ENCODE measurements at regions of chrX and their contacts with region 1.

Region 1: GRCh38 chrX:24150051-24150790 is 692 bp downstream of the ZFX start:
- DNase-seq: peak; percentile 76
- H3K4me3 Mint-ChIP-seq: peak overlapping the region; percentile 93
- H3K27ac Mint-ChIP-seq: peak overlapping the region; percentile 87
- H3K4me1 Mint-ChIP-seq: peaks cover 45% of the 10 kb centered on the region
- H3K27me3 Mint-ChIP-seq: no peaks in the 10 kb centered on the region

Region 2: DNA sequence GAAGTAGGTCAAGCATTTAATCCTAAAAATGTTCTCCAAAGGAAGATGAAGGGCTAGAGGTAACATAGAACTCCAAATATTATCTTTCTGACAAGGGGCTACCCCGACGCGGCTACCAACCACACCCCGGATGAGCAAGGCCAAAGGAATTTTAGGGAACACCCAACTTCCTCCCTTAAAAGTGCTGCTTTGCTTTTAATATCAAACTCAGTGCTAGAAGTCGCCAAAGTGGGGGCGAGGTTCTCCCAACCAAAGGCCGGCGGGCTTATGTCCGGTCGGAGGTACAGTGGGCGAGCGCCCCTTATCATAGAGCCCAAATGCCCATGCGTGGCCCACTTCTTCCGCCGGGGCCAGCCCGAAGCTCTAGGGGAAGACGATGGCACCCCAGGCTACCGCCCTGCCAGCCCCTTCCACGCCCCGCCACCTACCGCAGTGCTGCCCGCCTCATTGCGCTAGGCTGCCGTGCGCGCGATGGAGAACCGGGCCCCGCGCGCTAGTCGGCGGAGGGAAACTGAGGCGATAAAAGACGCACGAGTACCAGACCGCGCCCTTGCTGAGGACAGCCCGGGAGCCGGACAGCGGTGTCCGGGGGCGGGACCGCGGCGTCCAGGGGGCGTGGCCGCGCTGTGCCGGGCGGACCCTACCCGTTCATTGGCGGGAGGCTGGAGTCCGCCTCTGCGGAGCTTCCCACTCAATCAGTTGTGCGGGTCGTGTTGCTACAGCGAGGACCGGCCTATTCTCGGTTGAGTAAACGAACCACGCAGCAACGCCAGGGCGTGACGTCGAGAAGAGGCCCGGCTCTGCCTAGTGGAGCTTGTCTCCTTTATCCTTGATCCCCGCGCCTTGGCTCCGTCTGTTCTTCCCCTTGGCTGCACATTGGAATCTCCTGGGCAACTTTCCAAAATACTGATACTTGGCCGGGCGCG is 407.3 kb before region 1 on chrX and contains the start of gene ACOT9:
- intact Hi-C with region 1: loop called (anchors 5 kb)
- DNase-seq: peak; percentile 75
- H3K4me3 Mint-ChIP-seq: peak within 1 kb of the TSS; percentile 94
- H3K27ac Mint-ChIP-seq: peak within 1 kb of the TSS; percentile 90
- H3K4me1 Mint-ChIP-seq: peaks cover 19% of the 10 kb centered on the region
- H3K27me3 Mint-ChIP-seq: no peaks in the 10 kb centered on the region
- total RNA-seq, gene ACOT9: 75.2 and 76.0 TPM in 2 replicates

Region 3: DNA sequence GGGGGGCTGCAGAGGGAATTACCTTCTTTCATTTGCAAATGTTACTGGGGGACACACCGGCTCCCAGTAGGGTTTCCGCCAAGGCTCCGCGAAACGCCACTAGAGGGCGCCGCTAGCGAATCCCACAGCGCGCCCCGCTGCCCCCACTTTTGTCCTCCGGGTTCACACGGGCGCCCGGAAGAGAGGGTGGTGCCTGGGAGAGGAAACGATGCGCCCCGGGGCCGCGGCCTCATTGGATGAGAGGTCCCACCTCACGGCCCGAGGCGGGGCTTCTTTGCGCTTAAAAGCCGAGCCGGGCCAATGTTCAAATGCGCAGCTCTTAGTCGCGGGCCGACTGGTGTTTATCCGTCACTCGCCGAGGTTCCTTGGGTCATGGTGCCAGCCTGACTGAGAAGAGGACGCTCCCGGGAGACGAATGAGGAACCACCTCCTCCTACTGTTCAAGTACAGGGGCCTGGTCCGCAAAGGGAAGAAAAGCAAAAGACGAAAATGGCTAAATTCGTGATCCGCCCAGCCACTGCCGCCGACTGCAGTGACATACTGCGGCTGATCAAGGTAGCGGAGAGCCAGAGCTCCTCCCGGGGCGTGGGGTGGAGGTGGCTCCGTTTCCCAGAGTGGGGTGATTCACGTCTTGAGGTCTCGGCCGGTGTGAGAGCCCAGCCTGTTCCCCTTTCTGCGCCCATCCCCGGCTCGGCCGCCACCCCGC is 367.2 kb before region 1 on chrX and contains the start of gene SAT1:
- intact Hi-C with region 1: loop called (anchors 5 kb)
- DNase-seq: peak; percentile 90
- H3K4me3 Mint-ChIP-seq: peak within 1 kb of the TSS; percentile 90
- H3K27ac Mint-ChIP-seq: peak within 1 kb of the TSS; percentile 96
- H3K4me1 Mint-ChIP-seq: peaks cover 31% of the 10 kb centered on the region
- H3K27me3 Mint-ChIP-seq: no peaks in the 10 kb centered on the region
- total RNA-seq, gene SAT1: 76.7 and 78.8 TPM in 2 replicates

Region 4: DNA sequence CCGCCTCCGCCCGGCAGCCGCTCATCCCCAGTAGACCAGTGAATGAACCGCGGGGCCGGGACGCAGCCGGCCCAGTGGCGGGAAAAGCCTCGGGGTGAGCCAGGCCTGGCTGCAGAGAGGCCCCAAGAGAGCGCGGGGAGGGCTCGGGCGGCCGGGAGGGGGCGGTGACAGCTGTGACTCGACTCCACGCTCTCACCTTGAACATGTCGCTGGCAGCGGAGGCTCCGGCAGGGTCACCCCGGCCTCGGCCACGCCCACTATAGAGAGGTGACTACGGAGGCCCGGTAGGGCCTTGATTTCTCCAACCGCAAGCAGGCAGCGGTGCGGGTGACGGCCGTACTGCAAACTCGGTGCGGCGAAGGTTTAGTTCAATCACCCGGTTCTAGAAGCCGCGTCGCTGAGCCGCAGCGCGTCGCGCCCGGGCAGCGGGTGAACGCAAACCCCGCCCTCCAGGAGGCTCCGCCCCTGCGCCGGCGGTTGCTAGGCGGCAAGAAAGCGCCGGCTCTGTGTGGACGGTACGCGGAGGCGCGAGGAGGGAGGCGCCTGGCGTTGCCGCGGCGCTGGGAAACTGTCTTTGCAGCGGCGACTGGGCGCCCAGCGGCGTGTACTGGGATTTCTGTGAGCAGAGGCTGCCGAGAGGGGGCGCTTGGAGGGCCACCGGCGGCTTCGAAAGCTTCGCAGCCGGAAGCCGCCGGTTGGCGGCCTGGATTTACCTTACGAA is 242.6 kb before region 1 on chrX and contains the starts of genes APOO and CXorf58:
- intact Hi-C with region 1: loop called (anchors 5 kb)
- DNase-seq: peak; percentile 90
- H3K4me3 Mint-ChIP-seq: peak within 1 kb of the TSS; percentile 77
- H3K27ac Mint-ChIP-seq: peak within 1 kb of the TSS; percentile 85
- H3K4me1 Mint-ChIP-seq: peaks cover 22% of the 10 kb centered on the region
- H3K27me3 Mint-ChIP-seq: no peaks in the 10 kb centered on the region
- total RNA-seq, gene APOO: 21.9 and 22.4 TPM in 2 replicates
- total RNA-seq, gene CXorf58: 0.21 TPM in 1 of 2 replicates, not detected in the other

Region 5: GRCh38 chrX:24081661-24082264 is 68.5 kb before region 1 on chrX:
- intact Hi-C with region 1: loop called (anchors 2 kb)
- DNase-seq: peak; percentile 36
- H3K4me3 Mint-ChIP-seq: no peak overlapping the region
- H3K27ac Mint-ChIP-seq: peak overlapping the region; percentile 22
- H3K4me1 Mint-ChIP-seq: peaks cover 12% of the 10 kb centered on the region
- H3K27me3 Mint-ChIP-seq: no peaks in the 10 kb centered on the region

Region 6: GRCh38 chrX:24100713-24101112 is 49.5 kb before region 1 on chrX:
- intact Hi-C with region 1: loop called (anchors 5 kb)
- DNase-seq: no peak
- H3K4me3 Mint-ChIP-seq: no peak overlapping the region
- H3K27ac Mint-ChIP-seq: peak overlapping the region; percentile 78
- H3K4me1 Mint-ChIP-seq: peaks cover 21% of the 10 kb centered on the region
- H3K27me3 Mint-ChIP-seq: no peaks in the 10 kb centered on the region

Region 7: GRCh38 chrX:24169211-24169610 is 19.0 kb after region 1 on chrX:
- intact Hi-C with region 1: loop called (anchors 1 kb)
- DNase-seq: no peak
- H3K4me3 Mint-ChIP-seq: peak overlapping the region; percentile 38
- H3K27ac Mint-ChIP-seq: peak overlapping the region; percentile 76
- H3K4me1 Mint-ChIP-seq: peaks cover 38% of the 10 kb centered on the region
- H3K27me3 Mint-ChIP-seq: no peaks in the 10 kb centered on the region

Region 8: DNA sequence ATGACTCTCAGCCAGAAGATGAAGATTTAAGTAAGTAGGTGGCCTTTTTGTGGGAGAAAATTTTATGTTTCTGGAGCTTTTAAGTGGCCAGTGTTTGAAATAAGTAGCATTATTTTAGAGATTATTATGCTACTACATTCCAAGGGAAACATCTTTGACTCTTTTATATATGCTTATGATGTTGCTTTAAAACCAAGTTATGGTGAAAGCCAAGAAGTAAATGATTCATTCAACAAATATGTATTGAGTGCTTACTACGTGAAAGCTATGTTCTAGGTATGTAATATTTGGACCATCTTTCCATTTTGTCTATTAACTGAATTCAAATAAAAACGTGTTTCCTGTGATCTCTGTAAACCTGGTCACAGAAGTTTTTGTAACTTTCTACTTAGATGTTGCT is 57.6 kb after region 1 on chrX:
- intact Hi-C with region 1: no loop called
- DNase-seq: no peak
- H3K4me3 Mint-ChIP-seq: no peak overlapping the region
- H3K27ac Mint-ChIP-seq: no peak overlapping the region
- H3K4me1 Mint-ChIP-seq: peaks cover 12% of the 10 kb centered on the region
- H3K27me3 Mint-ChIP-seq: no peaks in the 10 kb centered on the region